ENCODE measurements at regions of chr4 and their contacts with region 1.

Region 1: DNA sequence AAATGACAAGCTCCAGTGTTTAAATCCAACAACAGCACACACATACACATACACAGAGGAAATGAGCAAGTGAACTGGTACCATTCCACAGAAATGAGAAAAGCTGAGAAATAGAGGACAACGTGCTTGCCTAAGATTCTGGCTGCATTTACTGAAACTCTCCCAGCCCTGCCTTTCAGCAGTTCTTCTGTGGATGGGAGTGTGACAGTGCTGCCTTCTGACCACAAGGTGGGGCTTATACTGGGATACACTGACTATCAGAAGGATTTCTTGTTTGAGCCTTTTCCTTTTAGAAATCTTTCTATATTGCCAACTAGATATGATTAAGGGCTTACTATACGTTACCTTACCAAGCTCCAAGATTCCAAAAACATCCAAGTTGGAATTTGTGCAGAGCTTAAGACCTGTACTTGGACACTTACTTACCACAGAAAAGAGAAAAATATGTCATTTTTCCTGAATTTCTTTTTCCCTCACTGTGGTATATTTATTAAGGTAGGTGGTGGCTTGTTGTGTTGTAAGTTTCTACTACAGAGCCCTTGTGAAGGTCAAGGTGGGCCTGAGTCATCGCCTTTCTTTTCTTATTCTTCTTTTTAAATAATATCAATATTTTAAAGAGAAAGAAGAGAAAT is 10.7 kb upstream of the CXCL8 start:
- DNase-seq: peak; percentile 73
- H3K4me3 ChIP-seq: no peak overlapping the region
- H3K27ac ChIP-seq: no peak overlapping the region
- H3K4me1 ChIP-seq: no peaks in the 10 kb centered on the region
- H3K27me3 ChIP-seq: no peaks in the 10 kb centered on the region
- CTCF ChIP-seq: peak; percentile 73

Region 2: DNA sequence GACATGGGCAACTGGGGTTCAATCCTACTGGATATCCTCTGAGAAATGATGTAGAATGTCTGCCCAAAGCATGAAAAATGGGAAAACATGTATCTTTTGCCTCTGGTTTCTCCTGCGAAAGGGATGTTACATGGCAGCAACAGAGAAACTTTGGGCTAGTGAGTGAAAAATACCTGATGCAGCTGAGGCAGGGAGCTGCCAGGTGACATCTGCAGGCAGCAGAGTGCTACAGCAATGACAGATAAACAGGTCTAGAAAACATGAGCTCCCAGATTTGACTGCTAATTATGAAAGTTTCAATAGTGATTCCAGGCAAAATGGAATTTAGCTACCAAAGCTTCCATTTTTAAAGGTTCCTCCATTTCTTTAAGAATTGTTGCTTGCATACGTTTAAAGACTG is 134.7 kb after region 1 on chr4:
- intact Hi-C with region 1: loop called (anchors 5 kb)
- DNase-seq: no peak
- H3K4me3 ChIP-seq: no peak overlapping the region
- H3K27ac ChIP-seq: no peak overlapping the region
- H3K4me1 ChIP-seq: no peaks in the 10 kb centered on the region
- H3K27me3 ChIP-seq: no peaks in the 10 kb centered on the region
- CTCF ChIP-seq: peak; percentile 33

Region 3: GRCh38 chr4:74021601-74022000 is 292.0 kb after region 1 on chr4:
- intact Hi-C with region 1: no loop called
- DNase-seq: no peak
- H3K4me3 ChIP-seq: no peak overlapping the region
- H3K27ac ChIP-seq: no peak overlapping the region
- H3K4me1 ChIP-seq: no peaks in the 10 kb centered on the region
- H3K27me3 ChIP-seq: no peaks in the 10 kb centered on the region
- CTCF ChIP-seq: no peak

Measured in colonic mucosa (tissue), 4 donors.